Activated CD4-positive, alpha-beta T cell treated with anti-CD3 and anti-CD28 coated beads for 36 hours (primary cell): ENCODE measurements at regions of chr20 and their contacts with region 1.

Region 1: GRCh38 chr20:33992923-33993575 is 662 bp upstream of the RALY start:
- DNase-seq: peak; percentile 100
- ATAC-seq: peak; percentile 87
- H3K4me3 Mint-ChIP-seq: peak overlapping the region; percentile 97
- H3K27ac Mint-ChIP-seq: peak overlapping the region; percentile 97
- H3K4me1 Mint-ChIP-seq: peaks cover 50% of the 10 kb centered on the region
- H3K27me3 Mint-ChIP-seq: no peaks in the 10 kb centered on the region

Region 2: GRCh38 chr20:32357869-32358631 is 1635.0 kb before region 1 on chr20 and contains the start of gene ASXL1:
- CTCF ChIA-PET with region 1: no interaction called
- POLR2A ChIA-PET with region 1: no interaction called
- intact Hi-C with region 1: loop called in 1 of 2 experiments (anchors 2 kb)
- DNase-seq: peak; percentile 98
- ATAC-seq: peak; percentile 82
- H3K4me3 Mint-ChIP-seq: peak within 1 kb of the TSS; percentile 99
- H3K27ac Mint-ChIP-seq: peak within 1 kb of the TSS; percentile 100
- H3K4me1 Mint-ChIP-seq: peaks cover 68% of the 10 kb centered on the region
- H3K27me3 Mint-ChIP-seq: no peaks in the 10 kb centered on the region
- total RNA-seq, gene ASXL1: 129 to 141 TPM

Region 3: DNA sequence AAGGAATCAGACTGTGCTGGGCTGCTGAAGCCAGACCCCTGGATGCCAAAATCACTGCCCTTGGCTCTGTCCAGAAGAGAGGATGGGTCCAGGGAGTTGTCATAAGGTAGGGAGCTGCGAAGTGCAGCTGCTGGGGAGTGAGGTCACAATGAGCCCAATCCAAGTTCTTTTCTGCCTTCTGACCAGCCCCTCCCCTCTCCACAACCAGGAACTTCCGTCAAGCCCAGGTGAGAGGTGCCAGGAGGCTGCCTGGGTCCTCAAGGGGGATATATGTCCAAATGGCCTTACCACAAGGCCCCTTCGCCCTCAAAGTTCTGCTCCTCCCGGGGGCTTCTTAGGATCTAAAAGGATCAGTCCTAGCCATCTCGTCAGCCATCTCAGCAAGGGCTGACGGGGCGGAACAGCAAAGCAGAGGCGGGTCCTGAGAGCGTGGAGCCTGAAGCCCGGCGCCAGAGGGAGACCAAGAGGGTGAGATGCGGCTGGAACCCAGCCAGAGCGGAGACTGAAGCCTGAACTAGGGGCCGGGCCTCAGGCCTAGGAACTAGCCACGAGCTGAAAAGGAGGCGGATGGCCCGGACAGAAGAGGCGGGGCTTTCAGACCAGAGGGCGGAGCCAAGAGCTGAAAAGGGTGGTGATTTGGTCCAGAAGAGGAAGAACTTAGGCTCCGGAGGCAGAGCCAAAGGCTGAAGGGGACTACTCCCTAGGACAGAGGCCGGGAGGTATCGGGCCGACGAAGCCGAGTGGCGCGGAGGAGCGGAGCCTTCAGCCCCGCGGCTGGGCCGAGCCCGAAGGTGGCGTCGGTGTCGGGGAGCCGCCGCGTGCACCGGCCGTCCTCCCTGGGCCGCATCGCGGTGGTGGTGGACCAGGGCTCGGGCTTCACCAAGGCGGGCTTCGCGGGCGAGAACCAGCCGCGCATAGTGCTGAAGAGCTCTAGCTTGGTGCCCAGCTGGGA is 326.5 kb before region 1 on chr20 and contains the start of gene ACTL10:
- CTCF ChIA-PET with region 1: no interaction called
- POLR2A ChIA-PET with region 1: no interaction called
- intact Hi-C with region 1: loop called in 1 of 2 experiments (anchors 5 kb)
- DNase-seq: peak; percentile 89
- ATAC-seq: peak; percentile 59
- H3K4me3 Mint-ChIP-seq: peak within 1 kb of the TSS; percentile 75
- H3K27ac Mint-ChIP-seq: peak within 1 kb of the TSS; percentile 90
- H3K4me1 Mint-ChIP-seq: peaks cover 31% of the 10 kb centered on the region
- H3K27me3 Mint-ChIP-seq: no peaks in the 10 kb centered on the region
- total RNA-seq, gene ACTL10: 0.91 to 1.7 TPM

Region 4: DNA sequence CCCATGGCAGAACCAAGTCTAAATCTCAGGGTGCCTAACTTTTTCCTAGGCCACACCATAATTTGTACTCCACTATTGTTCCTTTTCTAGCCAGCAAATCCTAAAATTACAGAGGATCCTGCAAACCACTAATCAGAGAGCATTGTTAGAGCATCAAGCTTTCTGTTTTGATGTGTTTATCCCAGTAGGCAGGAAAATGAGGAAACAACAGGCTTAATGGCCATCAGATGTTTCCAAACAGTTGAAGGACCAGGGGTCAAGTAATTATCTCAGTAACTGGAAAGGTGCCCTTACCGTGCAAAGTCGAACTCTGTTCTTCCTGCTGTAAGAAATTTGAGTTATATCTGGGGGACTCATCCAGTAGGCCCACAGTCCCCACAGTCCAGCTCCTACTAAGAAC is 59.4 kb after region 1 on chr20:
- CTCF ChIA-PET with region 1: no interaction called
- POLR2A ChIA-PET with region 1: no interaction called
- intact Hi-C with region 1: no loop called
- DNase-seq: no peak
- ATAC-seq: no peak
- H3K4me3 Mint-ChIP-seq: no peak overlapping the region
- H3K27ac Mint-ChIP-seq: no peak overlapping the region
- H3K4me1 Mint-ChIP-seq: peaks cover 82% of the 10 kb centered on the region
- H3K27me3 Mint-ChIP-seq: no peaks in the 10 kb centered on the region

Region 5: DNA sequence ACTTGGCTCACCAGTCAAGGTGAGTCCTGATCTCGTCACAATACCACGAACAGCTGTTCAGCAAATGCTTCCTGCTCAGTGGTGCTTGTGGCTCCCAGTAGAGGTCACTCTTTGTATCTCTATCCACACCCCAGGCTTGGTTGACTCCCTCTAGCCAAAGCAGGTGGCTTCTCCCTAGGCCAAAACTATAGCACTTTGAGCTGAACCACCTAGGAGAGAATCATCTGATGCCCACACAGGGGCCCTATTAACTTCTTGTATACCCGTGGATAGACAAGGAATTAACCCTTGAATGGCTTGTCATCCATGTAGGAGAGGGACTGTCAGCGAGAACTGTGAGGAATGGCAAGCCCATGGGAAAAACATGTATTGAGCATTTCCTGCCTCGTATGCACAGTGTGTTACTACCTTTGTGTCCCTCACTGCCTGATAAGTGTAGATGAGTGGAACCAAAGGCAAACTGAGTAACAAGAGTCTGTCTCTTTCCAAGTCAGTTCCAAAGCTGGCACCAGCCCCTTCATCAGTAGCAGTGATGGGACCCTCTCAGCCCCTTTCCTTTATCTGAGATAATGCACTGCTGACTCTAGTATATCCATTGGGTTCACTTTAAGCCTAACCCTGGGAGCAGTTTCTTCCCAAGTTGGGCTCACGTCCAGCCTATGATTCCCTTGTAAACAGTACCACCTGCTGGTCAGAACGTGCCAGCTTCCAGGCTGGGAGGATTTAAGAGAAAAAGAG is 76.5 kb after region 1 on chr20:
- CTCF ChIA-PET with region 1: interaction called, 6 read pairs
- POLR2A ChIA-PET with region 1: no interaction called
- intact Hi-C with region 1: loop called in 1 of 2 experiments (anchors 1 kb)
- DNase-seq: peak; percentile 71
- ATAC-seq: peak; percentile 83
- H3K4me3 Mint-ChIP-seq: no peak overlapping the region
- H3K27ac Mint-ChIP-seq: no peak overlapping the region
- H3K4me1 Mint-ChIP-seq: peaks cover 46% of the 10 kb centered on the region
- H3K27me3 Mint-ChIP-seq: no peaks in the 10 kb centered on the region

Region 6: GRCh38 chr20:34124469-34125249 is 131.6 kb after region 1 on chr20:
- CTCF ChIA-PET with region 1: no interaction called
- POLR2A ChIA-PET with region 1: no interaction called
- intact Hi-C with region 1: no loop called
- DNase-seq: no peak
- ATAC-seq: peak; percentile 36
- H3K4me3 Mint-ChIP-seq: no peak overlapping the region
- H3K27ac Mint-ChIP-seq: no peak overlapping the region
- H3K4me1 Mint-ChIP-seq: peaks cover 14% of the 10 kb centered on the region
- H3K27me3 Mint-ChIP-seq: peaks cover 4% of the 10 kb centered on the region

Region 7: GRCh38 chr20:34825530-34826362 is 832.7 kb after region 1 on chr20 and contains the start of gene NCOA6:
- CTCF ChIA-PET with region 1: no interaction called
- POLR2A ChIA-PET with region 1: no interaction called
- intact Hi-C with region 1: loop called in 1 of 2 experiments (anchors 2 kb)
- DNase-seq: peak; percentile 95
- ATAC-seq: peak; percentile 67
- H3K4me3 Mint-ChIP-seq: peak within 1 kb of the TSS; percentile 86
- H3K27ac Mint-ChIP-seq: peak within 1 kb of the TSS; percentile 95
- H3K4me1 Mint-ChIP-seq: peaks cover 30% of the 10 kb centered on the region
- H3K27me3 Mint-ChIP-seq: no peaks in the 10 kb centered on the region
- total RNA-seq, gene NCOA6: 20.3 to 31.1 TPM

Region 8: DNA sequence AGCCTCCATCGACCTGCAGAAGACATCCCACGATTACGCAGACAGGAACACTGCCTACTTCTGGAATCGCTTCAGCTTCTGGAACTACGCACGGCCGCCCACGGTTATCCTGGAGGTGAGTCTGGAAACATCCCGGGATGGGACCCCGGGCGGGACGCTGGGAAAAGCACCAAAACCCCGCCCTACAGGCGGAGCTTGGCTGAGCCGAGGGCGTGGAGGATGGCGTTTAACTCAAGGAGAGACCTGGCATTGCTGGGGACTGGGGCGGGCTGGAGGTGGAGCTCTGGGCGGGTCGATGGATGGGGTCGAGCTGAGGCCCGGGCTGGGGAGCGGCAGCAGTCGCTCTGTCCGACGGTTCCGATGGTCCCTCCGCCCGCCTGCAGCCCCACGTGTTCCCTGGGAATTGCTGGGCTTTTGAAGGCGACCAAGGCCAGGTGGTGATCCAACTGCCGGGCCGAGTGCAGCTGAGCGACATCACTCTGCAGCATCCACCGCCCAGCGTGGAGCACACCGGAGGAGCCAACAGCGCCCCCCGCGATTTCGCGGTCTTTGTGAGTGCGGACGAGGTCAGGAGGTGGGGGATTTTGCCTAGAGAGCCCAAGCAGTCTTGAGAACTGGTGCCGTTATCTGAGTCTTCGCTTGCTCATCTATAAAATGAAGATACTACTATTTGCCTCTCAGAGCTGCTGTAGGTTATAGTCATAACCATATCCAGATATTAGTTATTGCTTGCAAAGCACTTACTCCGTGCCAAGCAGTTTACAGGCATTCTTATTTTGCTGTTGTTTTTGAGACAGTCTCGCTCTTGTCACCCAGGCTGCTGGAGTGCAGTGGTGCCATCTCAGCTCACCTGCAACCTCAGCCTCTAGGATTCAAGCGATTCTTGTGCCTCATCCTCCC is 1626.4 kb after region 1 on chr20:
- CTCF ChIA-PET with region 1: no interaction called
- POLR2A ChIA-PET with region 1: no interaction called
- intact Hi-C with region 1: loop called in 1 of 2 experiments (anchors 2 kb)
- DNase-seq: peak; percentile 93
- ATAC-seq: peak; percentile 51
- H3K4me3 Mint-ChIP-seq: peak overlapping the region; percentile 83
- H3K27ac Mint-ChIP-seq: peak overlapping the region; percentile 92
- H3K4me1 Mint-ChIP-seq: peaks cover 48% of the 10 kb centered on the region
- H3K27me3 Mint-ChIP-seq: peaks cover 2% of the 10 kb centered on the region